Naive thymus-derived CD4-positive, alpha-beta T cell (primary cell): ENCODE measurements at regions of chr17 and their contacts with region 1.

Region 1: GRCh38 chr17:40531051-40531991 is 29.9 kb upstream of the TNS4 start:
- DNase-seq: peak in 6 of 9 donors; percentile 39 to 84 (median 66)
- ATAC-seq: peak; percentile 14
- H3K4me3 ChIP-seq: peak overlapping the region; percentile 15
- H3K4me3 Mint-ChIP-seq: peak overlapping the region in 8 of 10 donors; percentile 0 to 78 (median 48)
- H3K27ac ChIP-seq: no peak overlapping the region
- H3K27ac Mint-ChIP-seq: peak overlapping the region; percentile 72 to 99 (median 92)
- H3K4me1 ChIP-seq: peaks cover 63 to 67% of the 10 kb centered on the region in 2 donors
- H3K4me1 Mint-ChIP-seq: peaks cover 47 to 90% (median 70%) of the 10 kb centered on the region in 7 donors
- H3K27me3 ChIP-seq: no peaks in the 10 kb centered on the region
- H3K27me3 Mint-ChIP-seq: peaks cover 0 to 3% (median 0%) of the 10 kb centered on the region in 5 donors

Region 2: DNA sequence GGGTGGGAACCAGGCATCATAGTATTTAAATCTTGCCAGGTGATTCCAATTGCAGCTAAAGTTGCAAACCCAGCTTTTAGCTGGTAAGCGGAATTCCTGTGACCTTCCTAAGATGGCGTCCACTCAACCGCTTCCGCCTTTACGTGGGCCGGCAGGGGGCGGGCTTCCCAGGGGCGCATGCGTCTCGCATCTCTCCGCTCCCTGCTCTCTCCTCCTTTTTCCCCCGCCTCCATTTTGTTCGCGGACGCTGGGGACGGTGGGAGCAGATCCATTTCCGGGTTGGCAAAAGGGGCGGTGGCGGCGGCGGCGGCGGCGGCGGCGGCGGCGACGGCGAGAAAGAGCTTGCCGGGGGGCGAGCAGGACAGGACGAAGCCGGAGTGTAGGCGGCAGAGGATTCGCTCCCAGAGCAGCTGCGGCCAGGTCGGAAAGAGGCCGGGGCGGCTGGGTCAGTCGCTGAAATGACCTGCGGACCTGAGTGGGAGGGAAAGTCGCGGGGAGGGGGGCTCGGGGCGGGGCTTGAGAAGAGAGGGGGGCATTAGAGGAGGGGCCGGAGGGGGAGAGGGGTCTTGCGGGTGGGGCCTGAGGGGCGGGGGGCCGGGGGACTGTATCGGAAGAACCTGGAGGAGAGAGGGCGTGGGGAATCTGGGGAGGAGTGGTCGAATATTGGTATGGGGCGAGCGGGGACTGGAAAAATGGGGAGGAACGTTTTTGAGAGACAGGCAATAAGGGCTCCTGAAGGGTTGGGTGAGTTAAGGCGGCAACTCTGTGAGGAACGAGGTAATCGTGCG is 312.1 kb before region 1 on chr17 and contains the start of gene WIPF2:
- CTCF ChIA-PET with region 1: no interaction called
- POLR2A ChIA-PET with region 1: no interaction called
- intact Hi-C with region 1: loop called in 1 of 2 experiments (anchors 2 kb)
- DNase-seq: peak; percentile 88 to 97 (median 95)
- ATAC-seq: peak; percentile 96
- H3K4me3 ChIP-seq: peak within 1 kb of the TSS; percentile 74
- H3K4me3 Mint-ChIP-seq: peak within 1 kb of the TSS; percentile 86 to 100 (median 96)
- H3K27ac ChIP-seq: peak within 1 kb of the TSS; percentile 92
- H3K27ac Mint-ChIP-seq: peak within 1 kb of the TSS; percentile 96 to 100 (median 100)
- H3K4me1 ChIP-seq: peaks cover 9 to 10% of the 10 kb centered on the region in 2 donors
- H3K4me1 Mint-ChIP-seq: peaks cover 25 to 44% (median 32%) of the 10 kb centered on the region in 7 donors
- H3K27me3 ChIP-seq: no peaks in the 10 kb centered on the region
- H3K27me3 Mint-ChIP-seq: no peaks in the 10 kb centered on the region
- total RNA-seq, gene WIPF2: 24.8 to 31.8 (median 28.6) TPM

Region 3: GRCh38 chr17:40362696-40363110 is 168.6 kb before region 1 on chr17:
- CTCF ChIA-PET with region 1: interaction called, 25 read pairs
- POLR2A ChIA-PET with region 1: interaction called, 9 read pairs
- intact Hi-C with region 1: loop called (anchors 1 kb)
- DNase-seq: peak; percentile 60 to 90 (median 74)
- ATAC-seq: peak; percentile 88
- H3K4me3 ChIP-seq: peak overlapping the region; percentile 35
- H3K4me3 Mint-ChIP-seq: peak overlapping the region; percentile 10 to 87 (median 70)
- H3K27ac ChIP-seq: no peak overlapping the region
- H3K27ac Mint-ChIP-seq: peak overlapping the region in 1 of 9 donors; percentile 85
- H3K4me1 ChIP-seq: peaks cover 4 to 7% of the 10 kb centered on the region in 2 donors
- H3K4me1 Mint-ChIP-seq: peaks cover 4 to 37% (median 12%) of the 10 kb centered on the region in 7 donors
- H3K27me3 ChIP-seq: no peaks in the 10 kb centered on the region
- H3K27me3 Mint-ChIP-seq: peaks cover 0 to 23% (median 8%) of the 10 kb centered on the region in 5 donors

Region 4: DNA sequence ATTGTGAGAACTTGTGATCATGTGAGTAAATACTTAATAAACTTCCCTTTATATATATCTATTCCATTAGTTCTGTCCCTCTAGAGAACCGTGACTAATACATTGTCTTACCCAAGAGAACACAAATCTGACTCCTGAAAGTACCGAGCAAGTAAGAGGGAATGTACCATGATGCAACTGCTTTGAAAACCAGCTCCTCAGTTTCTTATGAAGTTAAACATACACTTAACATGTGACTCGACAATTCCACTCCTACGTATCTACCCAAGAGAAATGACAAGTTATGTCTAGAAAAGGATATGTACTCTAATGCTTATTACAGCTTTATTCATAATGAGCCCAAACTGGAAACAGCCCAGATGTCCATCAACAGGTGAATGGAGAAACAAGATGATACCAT is 158.0 kb before region 1 on chr17:
- CTCF ChIA-PET with region 1: no interaction called
- POLR2A ChIA-PET with region 1: no interaction called
- intact Hi-C with region 1: no loop called
- DNase-seq: no peak
- ATAC-seq: peak; percentile 48
- H3K4me3 ChIP-seq: no peak overlapping the region
- H3K4me3 Mint-ChIP-seq: no peak overlapping the region
- H3K27ac ChIP-seq: no peak overlapping the region
- H3K27ac Mint-ChIP-seq: no peak overlapping the region
- H3K4me1 ChIP-seq: no peaks in the 10 kb centered on the region
- H3K4me1 Mint-ChIP-seq: peaks cover 4 to 27% (median 5%) of the 10 kb centered on the region in 7 donors
- H3K27me3 ChIP-seq: no peaks in the 10 kb centered on the region
- H3K27me3 Mint-ChIP-seq: peaks cover 0 to 5% (median 4%) of the 10 kb centered on the region in 5 donors

Region 5: GRCh38 chr17:40443583-40444327 is 87.6 kb before region 1 on chr17:
- CTCF ChIA-PET with region 1: interaction called, 25 read pairs
- POLR2A ChIA-PET with region 1: interaction called, 7 read pairs
- intact Hi-C with region 1: loop called (anchors 1 kb)
- DNase-seq: peak; percentile 40 to 80 (median 61)
- ATAC-seq: peak; percentile 87
- H3K4me3 ChIP-seq: peak overlapping the region; percentile 21
- H3K4me3 Mint-ChIP-seq: peak overlapping the region; percentile 65 to 90 (median 84)
- H3K27ac ChIP-seq: peak overlapping the region; percentile 1
- H3K27ac Mint-ChIP-seq: peak overlapping the region in 8 of 9 donors; percentile 60 to 93 (median 78)
- H3K4me1 ChIP-seq: peaks cover 25 to 27% of the 10 kb centered on the region in 2 donors
- H3K4me1 Mint-ChIP-seq: peaks cover 30 to 58% (median 33%) of the 10 kb centered on the region in 7 donors
- H3K27me3 ChIP-seq: no peaks in the 10 kb centered on the region
- H3K27me3 Mint-ChIP-seq: peaks cover 0 to 5% (median 0%) of the 10 kb centered on the region in 5 donors

Region 6: GRCh38 chr17:40467281-40467867 is 63.9 kb before region 1 on chr17:
- CTCF ChIA-PET with region 1: no interaction called
- POLR2A ChIA-PET with region 1: no interaction called
- intact Hi-C with region 1: no loop called
- DNase-seq: no peak
- ATAC-seq: no peak
- H3K4me3 ChIP-seq: no peak overlapping the region
- H3K4me3 Mint-ChIP-seq: no peak overlapping the region
- H3K27ac ChIP-seq: no peak overlapping the region
- H3K27ac Mint-ChIP-seq: no peak overlapping the region
- H3K4me1 ChIP-seq: no peaks in the 10 kb centered on the region
- H3K4me1 Mint-ChIP-seq: peaks cover 0 to 6% (median 0%) of the 10 kb centered on the region in 7 donors
- H3K27me3 ChIP-seq: no peaks in the 10 kb centered on the region
- H3K27me3 Mint-ChIP-seq: peaks cover 0 to 11% (median 0%) of the 10 kb centered on the region in 5 donors

Region 7: GRCh38 chr17:40480501-40481003 is 50.8 kb before region 1 on chr17:
- CTCF ChIA-PET with region 1: interaction called, 73 read pairs
- POLR2A ChIA-PET with region 1: interaction called, 39 read pairs
- intact Hi-C with region 1: loop called (anchors 1 kb)
- DNase-seq: peak; percentile 59 to 96 (median 92)
- ATAC-seq: peak; percentile 94
- H3K4me3 ChIP-seq: peak overlapping the region; percentile 5
- H3K4me3 Mint-ChIP-seq: peak overlapping the region; percentile 64 to 83 (median 73)
- H3K27ac ChIP-seq: peak overlapping the region; percentile 76
- H3K27ac Mint-ChIP-seq: peak overlapping the region; percentile 93 to 100 (median 98)
- H3K4me1 ChIP-seq: peaks cover 24 to 48% of the 10 kb centered on the region in 2 donors
- H3K4me1 Mint-ChIP-seq: peaks cover 31 to 84% (median 64%) of the 10 kb centered on the region in 7 donors
- H3K27me3 ChIP-seq: no peaks in the 10 kb centered on the region
- H3K27me3 Mint-ChIP-seq: no peaks in the 10 kb centered on the region

Region 8: GRCh38 chr17:40551879-40552768 is 20.8 kb after region 1 on chr17:
- CTCF ChIA-PET with region 1: interaction called, 34 read pairs
- POLR2A ChIA-PET with region 1: interaction called, 1,524 read pairs
- intact Hi-C with region 1: loop called in 1 of 2 experiments (anchors 1 kb)
- DNase-seq: peak in 2 of 9 donors; percentile 33 to 43
- ATAC-seq: peak; percentile 2
- H3K4me3 ChIP-seq: no peak overlapping the region
- H3K4me3 Mint-ChIP-seq: peak overlapping the region in 9 of 10 donors; percentile 4 to 100 (median 58)
- H3K27ac ChIP-seq: peak overlapping the region; percentile 79
- H3K27ac Mint-ChIP-seq: peak overlapping the region; percentile 76 to 100 (median 99)
- H3K4me1 ChIP-seq: peaks cover 52 to 93% of the 10 kb centered on the region in 2 donors
- H3K4me1 Mint-ChIP-seq: peaks cover 59 to 100% (median 98%) of the 10 kb centered on the region in 7 donors
- H3K27me3 ChIP-seq: no peaks in the 10 kb centered on the region
- H3K27me3 Mint-ChIP-seq: no peaks in the 10 kb centered on the region

Region 9: GRCh38 chr17:40750391-40750790 is 219.1 kb after region 1 on chr17:
- CTCF ChIA-PET with region 1: no interaction called
- POLR2A ChIA-PET with region 1: no interaction called
- intact Hi-C with region 1: no loop called
- DNase-seq: no peak
- ATAC-seq: no peak
- H3K4me3 ChIP-seq: no peak overlapping the region
- H3K4me3 Mint-ChIP-seq: no peak overlapping the region
- H3K27ac ChIP-seq: no peak overlapping the region
- H3K27ac Mint-ChIP-seq: no peak overlapping the region
- H3K4me1 ChIP-seq: no peaks in the 10 kb centered on the region
- H3K4me1 Mint-ChIP-seq: peaks cover 0 to 2% (median 0%) of the 10 kb centered on the region in 7 donors
- H3K27me3 ChIP-seq: peaks cover 0 to 5% of the 10 kb centered on the region in 2 donors
- H3K27me3 Mint-ChIP-seq: peaks cover 33 to 53% (median 35%) of the 10 kb centered on the region in 5 donors